ENCODE measurements at regions of chr10 and their contacts with region 1.

Region 1: DNA sequence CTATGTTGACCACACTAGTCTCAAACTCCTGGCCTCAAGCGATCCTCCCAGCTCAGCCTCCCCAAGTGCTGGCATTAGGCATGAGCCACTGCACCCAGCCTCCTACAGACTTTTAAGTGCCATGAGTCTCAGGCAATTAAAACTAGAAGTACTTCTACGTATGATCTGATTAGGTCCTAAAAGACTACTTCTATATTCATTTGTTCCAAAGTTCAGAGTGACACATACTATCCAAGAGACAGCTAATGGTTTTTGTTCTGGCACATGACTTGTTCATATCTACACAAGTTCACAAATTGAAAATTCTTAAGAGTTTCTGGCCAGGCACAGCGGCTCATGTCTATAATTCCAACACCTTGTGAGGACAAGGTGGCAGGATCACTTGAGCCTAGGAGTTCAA is 11.7 kb downstream of the ARHGAP19 start:
- DNase-seq: no peak
- H3K4me3 ChIP-seq: no peak overlapping the region
- H3K27ac ChIP-seq: no peak overlapping the region
- H3K4me1 ChIP-seq: peaks cover 0 to 21% (median 10%) of the 10 kb centered on the region in 4 donors
- H3K27me3 ChIP-seq: no peaks in the 10 kb centered on the region
- CTCF ChIP-seq: no peak
- EP300 ChIP-seq: no peak
- POLR2A ChIP-seq: no peak

Region 2: GRCh38 chr10:97179731-97180362 is 100.9 kb before region 1 on chr10:
- intact Hi-C with region 1: no loop called
- DNase-seq: peak in 1 of 2 donors; percentile 60
- H3K4me3 ChIP-seq: peak overlapping the region in 2 of 4 donors; percentile 11
- H3K27ac ChIP-seq: no peak overlapping the region
- H3K4me1 ChIP-seq: peaks cover 0 to 7% (median 3%) of the 10 kb centered on the region in 4 donors
- H3K27me3 ChIP-seq: peaks cover 0 to 92% (median 33%) of the 10 kb centered on the region in 3 donors
- CTCF ChIP-seq: no peak
- EP300 ChIP-seq: no peak
- POLR2A ChIP-seq: no peak

Region 3: GRCh38 chr10:97349752-97350513 is 69.2 kb after region 1 on chr10:
- intact Hi-C with region 1: loop called (anchors 10 kb)
- DNase-seq: no peak
- H3K4me3 ChIP-seq: no peak overlapping the region
- H3K27ac ChIP-seq: no peak overlapping the region
- H3K4me1 ChIP-seq: peaks cover 0 to 16% (median 13%) of the 10 kb centered on the region in 4 donors
- H3K27me3 ChIP-seq: no peaks in the 10 kb centered on the region
- CTCF ChIP-seq: no peak
- EP300 ChIP-seq: no peak
- POLR2A ChIP-seq: no peak

Region 4: DNA sequence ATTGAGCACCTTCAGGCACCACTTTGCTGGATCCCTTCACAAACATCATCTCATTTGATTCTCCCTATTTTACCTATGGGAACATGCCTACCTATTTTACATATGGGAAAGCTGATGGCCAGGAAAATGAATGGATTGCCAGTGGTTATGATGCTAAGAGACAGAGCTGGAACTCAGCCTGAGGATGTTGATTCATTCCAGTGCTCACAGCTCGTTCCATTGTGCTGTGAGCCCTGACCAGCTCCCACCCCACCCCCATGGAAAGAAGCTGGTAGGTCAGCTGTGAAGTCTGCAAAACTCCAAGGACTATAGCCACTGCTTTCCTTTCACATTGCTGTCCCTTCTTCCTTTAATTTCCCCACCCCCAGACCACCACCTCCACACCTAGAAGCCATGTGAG is 227.6 kb after region 1 on chr10:
- intact Hi-C with region 1: no loop called
- DNase-seq: no peak
- H3K4me3 ChIP-seq: no peak overlapping the region
- H3K27ac ChIP-seq: no peak overlapping the region
- H3K4me1 ChIP-seq: peaks cover 0 to 18% (median 7%) of the 10 kb centered on the region in 4 donors
- H3K27me3 ChIP-seq: no peaks in the 10 kb centered on the region
- CTCF ChIP-seq: no peak
- EP300 ChIP-seq: no peak
- POLR2A ChIP-seq: no peak